Endothelial cell of umbilical vein (primary cell): ENCODE measurements at regions of chr6 and their contacts with region 1.

Region 1: DNA sequence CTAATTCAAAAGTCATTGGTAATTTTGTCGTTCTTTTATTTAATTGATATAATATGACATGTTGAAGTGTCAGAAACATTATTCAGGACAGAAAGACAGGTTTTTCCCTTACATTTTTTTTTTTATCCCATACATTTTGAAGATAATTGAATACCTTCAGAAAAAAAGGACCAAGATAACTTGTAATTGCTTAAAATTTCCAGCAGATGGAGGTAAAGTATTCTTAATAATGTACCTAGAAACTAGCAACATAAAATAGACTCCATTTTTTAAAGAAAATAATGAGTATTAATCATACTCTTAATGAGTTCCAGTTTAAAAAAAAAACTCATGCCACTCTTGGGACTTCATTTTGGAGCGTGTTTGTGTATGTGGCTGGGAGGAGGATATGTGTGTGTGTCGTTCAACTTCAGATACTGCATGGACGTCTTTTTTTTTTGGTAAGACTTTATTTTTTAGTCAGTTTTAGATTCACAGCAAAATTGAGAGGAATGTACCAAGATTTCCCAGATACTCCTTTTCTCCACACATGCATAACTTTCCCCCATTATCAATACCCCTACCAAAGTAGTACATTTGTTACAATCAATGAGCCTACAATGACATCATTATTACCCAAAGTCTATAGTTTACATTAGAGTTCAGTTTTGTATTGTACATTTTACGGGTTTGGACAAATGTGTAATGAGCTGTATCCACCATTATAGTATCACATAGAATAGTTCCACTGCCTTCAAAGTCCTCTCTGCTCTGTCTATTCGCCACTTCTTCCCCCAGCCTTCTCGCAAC is 79.4 kb downstream of the ROS1 start:
- DNase-seq: peak; percentile 32
- H3K4me3 ChIP-seq: no peak overlapping the region
- H3K27ac ChIP-seq: no peak overlapping the region
- H3K4me1 ChIP-seq: no peaks in the 10 kb centered on the region
- H3K27me3 ChIP-seq: peaks cover under 1 to 5% of the 10 kb centered on the region in 2 experiments
- CTCF ChIP-seq: peak in 1 of 2 donors; percentile 19
- POLR2A ChIP-seq: no peak

Region 2: GRCh38 chr6:117440558-117441525 is 94.5 kb after region 1 on chr6:
- CTCF ChIA-PET with region 1: no interaction called
- POLR2A ChIA-PET with region 1: no interaction called
- dilution Hi-C with region 1: no loop called
- intact Hi-C with region 1: loop called (anchors 5 kb)
- DNase-seq: no peak
- H3K4me3 ChIP-seq: no peak overlapping the region
- H3K27ac ChIP-seq: no peak overlapping the region
- H3K4me1 ChIP-seq: no peaks in the 10 kb centered on the region
- H3K27me3 ChIP-seq: peaks cover 11 to 34% of the 10 kb centered on the region in 2 experiments
- CTCF ChIP-seq: no peak
- POLR2A ChIP-seq: no peak

Region 3: DNA sequence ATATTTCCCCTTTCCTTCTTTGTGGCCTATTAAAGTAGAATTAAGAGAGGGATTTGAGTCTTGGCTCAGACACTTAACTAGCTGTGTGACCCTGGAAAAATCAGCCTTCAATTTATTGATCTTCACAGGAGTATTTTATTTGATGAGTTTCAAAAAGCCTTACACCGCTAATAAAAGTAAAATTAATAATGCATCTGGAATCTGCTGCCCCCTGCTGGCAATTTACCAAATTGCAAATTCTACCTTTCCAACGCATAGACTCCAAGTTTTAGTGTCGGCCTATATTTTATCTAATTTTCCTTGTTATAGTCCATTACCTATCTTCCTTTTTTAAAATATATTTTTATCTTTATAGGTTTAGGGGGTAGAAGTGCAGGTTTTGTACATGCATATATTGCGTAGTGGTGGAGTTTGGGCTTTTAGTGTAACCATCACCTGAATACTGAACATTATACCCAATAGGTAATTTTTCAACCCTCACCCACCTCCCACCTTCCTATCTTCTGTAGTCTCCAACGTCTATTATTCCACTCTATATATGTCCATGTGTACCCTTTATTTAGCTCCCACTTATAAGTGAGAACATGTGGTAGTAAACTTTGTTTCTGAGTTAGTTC is 209.7 kb after region 1 on chr6:
- CTCF ChIA-PET with region 1: no interaction called
- POLR2A ChIA-PET with region 1: no interaction called
- dilution Hi-C with region 1: no loop called
- intact Hi-C with region 1: loop called (anchors 2 kb)
- DNase-seq: peak; percentile 68
- H3K4me3 ChIP-seq: no peak overlapping the region
- H3K27ac ChIP-seq: no peak overlapping the region
- H3K4me1 ChIP-seq: peaks cover 25% of the 10 kb centered on the region
- H3K27me3 ChIP-seq: no peaks in the 10 kb centered on the region
- CTCF ChIP-seq: peak; percentile 45 to 59
- POLR2A ChIP-seq: no peak

Region 4: GRCh38 chr6:117674991-117675657 is 328.8 kb after region 1 on chr6 and contains the start of gene NUS1:
- CTCF ChIA-PET with region 1: no interaction called
- POLR2A ChIA-PET with region 1: no interaction called
- dilution Hi-C with region 1: no loop called
- intact Hi-C with region 1: loop called (anchors 5 kb)
- DNase-seq: peak; percentile 97
- H3K4me3 ChIP-seq: peak within 1 kb of the TSS; percentile 33 to 82 (median 75)
- H3K27ac ChIP-seq: peak within 1 kb of the TSS; percentile 52
- H3K4me1 ChIP-seq: peaks cover 21% of the 10 kb centered on the region
- H3K27me3 ChIP-seq: no peaks in the 10 kb centered on the region
- CTCF ChIP-seq: peak; percentile 86 to 88
- POLR2A ChIP-seq: no peak
- total RNA-seq, gene NUS1: 33.4 and 34.3 TPM in 2 replicates

Region 5: DNA sequence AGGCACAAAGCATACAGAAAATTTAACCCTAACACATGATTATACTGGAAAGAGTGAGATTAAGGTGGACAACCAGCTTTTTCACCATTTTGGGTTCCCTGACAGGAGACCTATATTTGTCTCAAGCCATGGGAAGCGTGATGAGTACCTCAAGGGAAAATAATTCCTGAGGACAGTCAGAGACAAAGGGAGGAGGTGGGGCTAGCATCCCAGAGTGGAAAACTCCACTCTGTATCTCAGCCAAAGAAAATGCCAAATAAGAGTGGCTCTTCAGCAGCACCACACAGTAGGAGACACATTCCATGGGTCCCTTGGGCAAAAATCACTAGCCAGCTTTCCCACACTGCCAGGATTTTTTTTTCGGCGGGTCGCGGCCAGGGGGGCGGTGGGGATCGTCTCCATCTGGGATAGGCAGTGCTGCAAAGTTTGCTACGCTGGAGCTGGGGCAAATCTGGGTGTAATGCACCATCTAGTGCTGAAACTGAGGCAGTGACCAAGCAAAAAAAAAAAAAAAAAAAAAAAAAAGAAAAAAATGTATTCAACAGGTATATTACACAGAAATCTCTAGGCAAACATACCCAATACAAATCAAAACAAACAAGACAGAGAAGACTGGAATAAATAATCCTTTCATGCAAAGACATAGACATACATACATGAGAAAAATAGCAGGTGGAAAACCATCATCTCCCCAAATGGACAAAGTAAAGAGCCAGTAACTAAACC is 483.4 kb after region 1 on chr6:
- CTCF ChIA-PET with region 1: interaction called, 3 read pairs
- POLR2A ChIA-PET with region 1: no interaction called
- dilution Hi-C with region 1: no loop called
- intact Hi-C with region 1: loop called (anchors 1 kb)
- DNase-seq: peak; percentile 39
- H3K4me3 ChIP-seq: peak overlapping the region in 1 of 3 experiments; percentile 10
- H3K27ac ChIP-seq: no peak overlapping the region
- H3K4me1 ChIP-seq: no peaks in the 10 kb centered on the region
- H3K27me3 ChIP-seq: no peaks in the 10 kb centered on the region
- CTCF ChIP-seq: peak in 1 of 2 donors; percentile 24
- POLR2A ChIP-seq: no peak

Region 6: GRCh38 chr6:117906853-117907599 is 560.7 kb after region 1 on chr6 and contains the start of gene SLC35F1:
- CTCF ChIA-PET with region 1: no interaction called
- POLR2A ChIA-PET with region 1: no interaction called
- dilution Hi-C with region 1: no loop called
- intact Hi-C with region 1: loop called (anchors 1 kb)
- DNase-seq: peak; percentile 31
- H3K4me3 ChIP-seq: peak within 1 kb of the TSS in 2 of 3 experiments; percentile 37 to 46
- H3K27ac ChIP-seq: no peak within 1 kb of the TSS
- H3K4me1 ChIP-seq: no peaks in the 10 kb centered on the region
- H3K27me3 ChIP-seq: peaks cover 12 to 33% of the 10 kb centered on the region in 2 experiments
- CTCF ChIP-seq: peak; percentile 19 to 63
- POLR2A ChIP-seq: no peak
- total RNA-seq, gene SLC35F1: not detected in 2 replicates